ENCODE measurements at regions of chr9 and their contacts with region 1.

Region 1: DNA sequence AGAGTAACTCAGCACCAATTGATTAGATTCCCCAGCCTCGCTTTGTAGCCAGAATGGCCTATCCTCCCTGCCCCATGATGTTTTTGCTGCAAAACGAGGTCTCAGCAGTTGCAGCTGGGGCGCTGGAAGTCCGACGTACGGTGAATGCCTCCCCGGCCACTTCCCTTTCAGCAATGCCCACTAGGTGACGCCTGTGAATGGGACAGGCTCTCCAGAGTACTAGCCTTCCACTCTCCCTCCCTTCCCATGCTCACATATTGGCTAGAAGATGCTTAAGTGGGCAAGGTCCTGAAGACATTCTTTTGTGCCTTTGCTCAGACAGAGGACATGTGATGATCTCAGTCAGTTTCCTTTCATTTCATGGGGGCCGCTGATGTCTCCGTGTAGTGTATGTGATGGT is 50.8 kb downstream of the DMRT2 start:
- DNase-seq: peak; percentile 38 to 63
- ATAC-seq: peak in 3 of 4 donors; percentile 48 to 76 (median 72)
- H3K4me3 ChIP-seq: no peak overlapping the region
- H3K27ac ChIP-seq: no peak overlapping the region
- H3K4me1 ChIP-seq: no peaks in the 10 kb centered on the region
- H3K27me3 ChIP-seq: no peaks in the 10 kb centered on the region
- CTCF ChIP-seq: peak; percentile 55

Region 2: GRCh38 chr9:1429297-1429696 is 328.4 kb after region 1 on chr9:
- intact Hi-C with region 1: loop called in 1 of 2 experiments (anchors 5 kb)
- DNase-seq: no peak
- ATAC-seq: no peak
- H3K4me3 ChIP-seq: no peak overlapping the region
- H3K27ac ChIP-seq: no peak overlapping the region
- H3K4me1 ChIP-seq: no peaks in the 10 kb centered on the region
- H3K27me3 ChIP-seq: no peaks in the 10 kb centered on the region
- CTCF ChIP-seq: peak; percentile 29

Region 3: DNA sequence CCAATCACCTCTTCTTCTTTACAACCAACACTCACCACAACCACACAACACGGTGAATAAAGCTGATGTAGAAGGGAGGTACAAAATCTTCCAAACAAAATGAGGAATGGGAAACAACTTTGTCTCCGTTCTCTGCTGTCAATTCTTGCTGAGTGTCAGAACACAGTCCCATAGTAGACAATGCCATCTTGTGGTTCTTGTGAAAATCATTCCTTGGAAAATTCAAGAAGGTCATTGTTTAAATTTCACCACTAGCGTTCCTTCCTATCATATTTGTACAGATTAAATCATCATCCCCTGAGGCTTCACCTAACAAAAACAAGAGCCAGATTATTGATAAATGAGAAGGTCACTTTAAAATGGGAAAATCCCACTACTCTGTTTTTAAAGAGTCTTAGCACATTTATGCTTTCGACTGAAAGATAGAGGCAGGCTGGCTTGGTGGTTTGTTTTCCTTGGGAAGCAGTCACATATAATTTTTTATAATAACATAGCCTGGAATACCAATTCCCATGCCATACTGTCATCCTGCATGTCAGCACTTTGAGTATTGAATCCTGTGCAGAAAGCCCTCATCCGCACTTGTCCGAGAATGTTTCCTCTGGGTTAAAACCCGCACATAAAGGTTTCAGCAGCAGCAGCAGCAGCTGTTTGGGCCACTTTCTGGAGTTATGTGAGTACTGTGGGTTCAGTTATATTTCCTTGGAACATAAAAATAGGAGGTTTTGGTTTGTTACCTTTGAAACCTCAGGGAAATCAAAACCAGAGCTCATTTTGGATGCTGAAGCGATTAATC is 519.2 kb after region 1 on chr9:
- intact Hi-C with region 1: loop called in 1 of 2 experiments (anchors 5 kb)
- DNase-seq: no peak
- ATAC-seq: no peak
- H3K4me3 ChIP-seq: no peak overlapping the region
- H3K27ac ChIP-seq: no peak overlapping the region
- H3K4me1 ChIP-seq: no peaks in the 10 kb centered on the region
- H3K27me3 ChIP-seq: no peaks in the 10 kb centered on the region
- CTCF ChIP-seq: peak; percentile 25

Measured in psoas muscle (tissue), 8 donors.